Ovary (tissue), 10 donors: ENCODE measurements at regions of chr2 and their contacts with region 1.

Region 1: GRCh38 chr2:157777427-157777826 is 98.7 kb downstream of the ACVR1 start:
- DNase-seq: peak; percentile 34 to 71 (median 49)
- H3K4me3 ChIP-seq: no peak overlapping the region
- H3K27ac ChIP-seq: no peak overlapping the region
- H3K4me1 ChIP-seq: peaks cover 2% of the 10 kb centered on the region
- H3K27me3 ChIP-seq: no peaks in the 10 kb centered on the region
- CTCF ChIP-seq: peak in 2 of 3 donors; percentile 62 to 66
- EP300 ChIP-seq: no peak
- POLR2A ChIP-seq: no peak

Region 2: DNA sequence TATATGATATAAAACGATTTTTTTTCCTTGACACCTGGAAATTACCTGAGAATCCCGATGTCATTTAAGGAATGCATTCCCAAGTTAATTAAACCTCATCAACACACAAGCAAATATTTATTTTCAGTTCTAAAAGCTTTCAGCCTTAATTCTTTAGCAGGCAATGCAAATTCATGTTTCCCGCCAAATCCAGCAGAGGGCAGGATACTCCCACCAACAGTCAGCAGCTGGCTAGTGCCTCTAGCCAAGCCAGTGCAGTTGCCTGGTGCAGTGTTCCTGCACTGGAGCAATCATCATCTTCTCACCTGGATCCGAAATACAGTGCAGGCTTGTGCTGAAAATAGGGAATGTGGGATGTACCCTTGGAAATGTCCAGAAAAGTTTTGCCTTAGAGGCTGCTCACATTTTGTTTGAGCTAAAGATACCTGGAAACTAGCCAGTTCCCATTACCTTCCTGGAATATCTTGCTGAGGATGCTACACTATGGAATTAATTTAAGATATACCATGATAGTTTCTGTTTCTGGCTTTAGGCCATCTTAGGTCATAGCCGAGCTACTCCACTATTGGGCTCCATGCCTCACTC is 285.1 kb before region 1 on chr2:
- intact Hi-C with region 1: loop called in 1 of 4 experiments (anchors 10 kb)
- DNase-seq: peak; percentile 49 to 70 (median 60)
- H3K4me3 ChIP-seq: no peak overlapping the region
- H3K27ac ChIP-seq: no peak overlapping the region
- H3K4me1 ChIP-seq: peaks cover 2% of the 10 kb centered on the region
- H3K27me3 ChIP-seq: no peaks in the 10 kb centered on the region
- CTCF ChIP-seq: peak in 2 of 3 donors; percentile 27 to 58
- EP300 ChIP-seq: no peak
- POLR2A ChIP-seq: no peak

Region 3: DNA sequence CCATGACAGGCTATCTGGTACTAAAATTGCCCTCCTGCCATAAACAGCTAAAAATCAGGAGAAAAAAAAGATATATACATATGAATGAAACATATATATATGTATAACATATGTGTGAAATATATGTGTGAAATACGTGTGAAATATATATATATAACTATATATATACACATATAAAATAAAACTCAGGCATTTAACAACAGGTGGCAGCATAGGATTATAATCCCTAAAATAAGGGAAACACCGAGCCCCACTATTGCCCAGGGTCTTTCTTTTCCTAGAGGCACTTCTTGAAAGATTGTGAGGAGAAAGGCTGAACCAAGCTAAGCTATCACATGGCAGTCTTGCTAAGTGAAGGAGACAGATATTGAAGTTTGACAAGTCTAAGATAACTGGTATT is 267.7 kb before region 1 on chr2:
- intact Hi-C with region 1: loop called in 1 of 4 experiments (anchors 10 kb)
- DNase-seq: no peak
- H3K4me3 ChIP-seq: no peak overlapping the region
- H3K27ac ChIP-seq: no peak overlapping the region
- H3K4me1 ChIP-seq: no peaks in the 10 kb centered on the region
- H3K27me3 ChIP-seq: no peaks in the 10 kb centered on the region
- CTCF ChIP-seq: no peak
- EP300 ChIP-seq: no peak
- POLR2A ChIP-seq: no peak

Region 4: GRCh38 chr2:157877761-157878402 is 100.5 kb after region 1 on chr2:
- intact Hi-C with region 1: loop called in 1 of 4 experiments (anchors 2 kb)
- DNase-seq: no peak
- H3K4me3 ChIP-seq: no peak overlapping the region
- H3K27ac ChIP-seq: no peak overlapping the region
- H3K4me1 ChIP-seq: peaks cover 14% of the 10 kb centered on the region
- H3K27me3 ChIP-seq: no peaks in the 10 kb centered on the region
- CTCF ChIP-seq: no peak
- EP300 ChIP-seq: no peak
- POLR2A ChIP-seq: no peak